B cell (primary cell): ENCODE measurements at regions of chr9 and their contacts with region 1.

Region 1: DNA sequence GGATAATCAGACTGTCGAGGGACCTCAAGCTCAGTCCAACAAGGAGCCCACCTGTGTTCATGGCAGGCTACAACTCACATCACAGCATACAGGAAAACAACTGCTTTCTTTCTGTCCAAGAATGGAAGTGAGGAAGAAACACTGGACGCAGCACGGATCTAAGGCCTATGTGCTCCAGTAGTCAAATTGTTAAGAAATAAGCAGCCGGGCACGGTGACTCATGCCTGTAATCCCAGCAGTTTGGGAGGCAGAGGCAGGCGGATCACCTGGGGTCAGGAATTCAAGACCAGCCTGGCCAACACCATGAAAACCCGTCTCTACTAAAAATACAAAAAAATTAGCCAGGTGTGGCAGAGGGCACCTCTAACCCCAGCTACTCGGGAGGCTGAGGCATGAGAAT is 427.8 kb downstream of the BNC2 start:
- DNase-seq: no peak
- ATAC-seq: no peak
- H3K4me3 ChIP-seq: no peak overlapping the region
- H3K4me3 Mint-ChIP-seq: no peak overlapping the region
- H3K27ac ChIP-seq: no peak overlapping the region
- H3K27ac Mint-ChIP-seq: no peak overlapping the region
- H3K4me1 ChIP-seq: no peaks in the 10 kb centered on the region
- H3K4me1 Mint-ChIP-seq: no peaks in the 10 kb centered on the region
- H3K27me3 ChIP-seq: no peaks in the 10 kb centered on the region
- H3K27me3 Mint-ChIP-seq: no peaks in the 10 kb centered on the region
- CTCF ChIP-seq: no peak

Region 2: GRCh38 chr9:16509997-16510396 is 67.4 kb after region 1 on chr9:
- CTCF ChIA-PET with region 1: no interaction called
- POLR2A ChIA-PET with region 1: no interaction called
- intact Hi-C with region 1: loop called (anchors 10 kb)
- DNase-seq: no peak
- ATAC-seq: no peak
- H3K4me3 ChIP-seq: no peak overlapping the region
- H3K4me3 Mint-ChIP-seq: no peak overlapping the region
- H3K27ac ChIP-seq: no peak overlapping the region
- H3K27ac Mint-ChIP-seq: no peak overlapping the region
- H3K4me1 ChIP-seq: no peaks in the 10 kb centered on the region
- H3K4me1 Mint-ChIP-seq: no peaks in the 10 kb centered on the region
- H3K27me3 ChIP-seq: no peaks in the 10 kb centered on the region
- H3K27me3 Mint-ChIP-seq: no peaks in the 10 kb centered on the region
- CTCF ChIP-seq: no peak